ENCODE measurements at regions of chr1 and their contacts with region 1.

Region 1: DNA sequence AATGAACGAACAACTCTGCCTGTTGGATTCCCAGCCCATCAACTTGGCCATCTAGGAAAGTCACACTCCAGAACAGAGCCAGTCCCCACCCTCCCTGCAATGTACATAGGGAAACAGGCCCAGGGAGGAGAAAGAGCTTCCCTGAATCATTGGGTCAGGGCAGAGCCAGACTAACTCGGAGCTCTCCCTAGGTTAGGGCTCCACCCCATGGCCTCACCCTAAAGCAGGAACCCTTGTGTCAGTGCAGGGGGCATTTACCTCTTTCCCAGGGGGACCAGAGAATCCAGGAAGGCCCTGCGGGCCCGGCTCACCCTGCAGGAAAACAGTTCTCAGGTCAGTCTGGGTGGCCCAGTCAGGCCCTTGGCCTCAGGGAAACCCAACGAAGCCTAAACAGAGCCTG is 11.6 kb downstream of the COL9A2 start:
- DNase-seq: peak; percentile 61 to 78
- H3K4me3 ChIP-seq: peak overlapping the region; percentile 25; the same call in 1 of the 2 replicates
- H3K27ac ChIP-seq: peak overlapping the region; percentile 88
- H3K4me1 ChIP-seq: peaks cover 30% of the 10 kb centered on the region
- H3K27me3 ChIP-seq: no peaks in the 10 kb centered on the region
- CTCF ChIP-seq: peak; percentile 55

Region 2: GRCh38 chr1:40064797-40065499 is 240.5 kb before region 1 on chr1:
- CTCF ChIA-PET with region 1: no interaction called
- POLR2A ChIA-PET with region 1: no interaction called
- intact Hi-C with region 1: loop called (anchors 1 kb)
- DNase-seq: no peak
- H3K4me3 ChIP-seq: no peak overlapping the region
- H3K27ac ChIP-seq: no peak overlapping the region
- H3K4me1 ChIP-seq: peaks cover 9% of the 10 kb centered on the region
- H3K27me3 ChIP-seq: no peaks in the 10 kb centered on the region
- CTCF ChIP-seq: no peak

Region 3: GRCh38 chr1:40167317-40167716 is 138.1 kb before region 1 on chr1:
- CTCF ChIA-PET with region 1: no interaction called
- POLR2A ChIA-PET with region 1: interaction called, 10 read pairs
- intact Hi-C with region 1: no loop called
- DNase-seq: no peak
- H3K4me3 ChIP-seq: no peak overlapping the region
- H3K27ac ChIP-seq: no peak overlapping the region
- H3K4me1 ChIP-seq: peaks cover 28% of the 10 kb centered on the region
- H3K27me3 ChIP-seq: no peaks in the 10 kb centered on the region
- CTCF ChIP-seq: no peak

Region 4: GRCh38 chr1:40338745-40339424 is 33.4 kb after region 1 on chr1:
- CTCF ChIA-PET with region 1: no interaction called
- POLR2A ChIA-PET with region 1: no interaction called
- intact Hi-C with region 1: no loop called
- DNase-seq: peak; percentile 71 to 93
- H3K4me3 ChIP-seq: no peak overlapping the region; the same call in 1 of the 2 replicates
- H3K27ac ChIP-seq: no peak overlapping the region
- H3K4me1 ChIP-seq: peaks cover 10% of the 10 kb centered on the region
- H3K27me3 ChIP-seq: no peaks in the 10 kb centered on the region
- CTCF ChIP-seq: peak; percentile 98

Region 5: GRCh38 chr1:40381268-40382107 is 76.0 kb after region 1 on chr1:
- CTCF ChIA-PET with region 1: no interaction called
- POLR2A ChIA-PET with region 1: interaction called, 12 read pairs
- intact Hi-C with region 1: no loop called
- DNase-seq: no peak
- H3K4me3 ChIP-seq: no peak overlapping the region
- H3K27ac ChIP-seq: no peak overlapping the region
- H3K4me1 ChIP-seq: no peaks in the 10 kb centered on the region
- H3K27me3 ChIP-seq: no peaks in the 10 kb centered on the region
- CTCF ChIP-seq: no peak

Region 6: GRCh38 chr1:40404670-40405462 is 99.4 kb after region 1 on chr1:
- CTCF ChIA-PET with region 1: no interaction called
- POLR2A ChIA-PET with region 1: no interaction called
- intact Hi-C with region 1: no loop called
- DNase-seq: peak; percentile 32 to 54
- H3K4me3 ChIP-seq: no peak overlapping the region
- H3K27ac ChIP-seq: no peak overlapping the region
- H3K4me1 ChIP-seq: no peaks in the 10 kb centered on the region; the same call in 1 of the 2 replicates
- H3K27me3 ChIP-seq: no peaks in the 10 kb centered on the region
- CTCF ChIP-seq: peak; percentile 91

Measured in PC-9 (cell line).